Endothelial cell of umbilical vein (primary cell): ENCODE measurements at regions of chr2 and their contacts with region 1.

Region 1: GRCh38 chr2:161881465-161881864 is 192.6 kb downstream of the DPP4 start:
- DNase-seq: no peak
- H3K4me3 ChIP-seq: no peak overlapping the region
- H3K27ac ChIP-seq: no peak overlapping the region
- H3K4me1 ChIP-seq: no peaks in the 10 kb centered on the region
- H3K27me3 ChIP-seq: peaks cover 0 to 2% of the 10 kb centered on the region in 2 experiments
- CTCF ChIP-seq: no peak
- POLR2A ChIP-seq: no peak

Region 2: GRCh38 chr2:161871113-161871512 is 10.4 kb before region 1 on chr2:
- CTCF ChIA-PET with region 1: no interaction called
- POLR2A ChIA-PET with region 1: no interaction called
- dilution Hi-C with region 1: no loop called
- intact Hi-C with region 1: loop called (anchors 1 kb)
- DNase-seq: no peak
- H3K4me3 ChIP-seq: no peak overlapping the region
- H3K27ac ChIP-seq: no peak overlapping the region
- H3K4me1 ChIP-seq: no peaks in the 10 kb centered on the region
- H3K27me3 ChIP-seq: no peaks in the 10 kb centered on the region
- CTCF ChIP-seq: no peak
- POLR2A ChIP-seq: no peak